ENCODE measurements at regions of chr16 and their contacts with region 1.

Region 1: DNA sequence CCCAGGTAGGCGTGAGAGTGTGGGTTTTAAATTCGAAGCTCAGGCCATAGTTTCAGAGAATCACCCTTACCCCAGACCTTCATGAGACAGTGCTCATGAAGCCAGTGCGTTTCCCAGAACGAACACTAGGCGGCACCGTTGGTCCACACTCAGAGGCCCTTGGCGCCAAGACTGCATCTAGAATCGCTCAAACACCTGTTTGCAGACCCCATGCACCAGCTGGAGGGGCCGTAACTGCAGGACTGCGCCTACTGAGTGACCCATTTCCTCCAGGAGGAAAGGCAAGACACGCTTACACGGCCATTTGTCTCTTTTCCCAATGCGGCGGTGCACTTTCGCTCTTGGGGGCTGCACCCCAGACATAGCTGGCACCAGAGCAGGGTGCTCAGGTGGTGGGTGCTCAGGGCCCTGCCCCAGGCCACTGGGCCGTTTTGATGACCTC is 34.0 kb downstream of the ADGRG5 start:
- DNase-seq: peak; percentile 87
- H3K4me3 Mint-ChIP-seq: no peak overlapping the region
- H3K27ac Mint-ChIP-seq: peak overlapping the region; percentile 97
- H3K4me1 Mint-ChIP-seq: peaks cover 51% of the 10 kb centered on the region
- H3K27me3 Mint-ChIP-seq: peaks cover 2% of the 10 kb centered on the region

Region 2: GRCh38 chr16:57372372-57373116 is 203.9 kb before region 1 on chr16 and contains the start of gene CX3CL1:
- CTCF ChIA-PET with region 1: no interaction called
- POLR2A ChIA-PET with region 1: no interaction called
- DNase-seq: no peak
- H3K4me3 Mint-ChIP-seq: no peak within 1 kb of the TSS
- H3K27ac Mint-ChIP-seq: no peak within 1 kb of the TSS
- H3K4me1 Mint-ChIP-seq: peaks cover 4% of the 10 kb centered on the region
- H3K27me3 Mint-ChIP-seq: peaks cover 2% of the 10 kb centered on the region
- total RNA-seq, gene CX3CL1: not detected

Region 3: GRCh38 chr16:57591086-57591869 is 14.8 kb after region 1 on chr16:
- CTCF ChIA-PET with region 1: interaction called, 60 read pairs
- POLR2A ChIA-PET with region 1: no interaction called
- DNase-seq: peak; percentile 72
- H3K4me3 Mint-ChIP-seq: peak overlapping the region; percentile 53
- H3K27ac Mint-ChIP-seq: peak overlapping the region; percentile 92
- H3K4me1 Mint-ChIP-seq: peaks cover 58% of the 10 kb centered on the region
- H3K27me3 Mint-ChIP-seq: no peaks in the 10 kb centered on the region

Region 4: GRCh38 chr16:57609541-57610401 is 33.3 kb after region 1 on chr16:
- CTCF ChIA-PET with region 1: interaction called, 16 read pairs
- POLR2A ChIA-PET with region 1: no interaction called
- DNase-seq: peak; percentile 82
- H3K4me3 Mint-ChIP-seq: peak overlapping the region; percentile 53
- H3K27ac Mint-ChIP-seq: peak overlapping the region; percentile 95
- H3K4me1 Mint-ChIP-seq: peaks cover 59% of the 10 kb centered on the region
- H3K27me3 Mint-ChIP-seq: no peaks in the 10 kb centered on the region

Region 5: DNA sequence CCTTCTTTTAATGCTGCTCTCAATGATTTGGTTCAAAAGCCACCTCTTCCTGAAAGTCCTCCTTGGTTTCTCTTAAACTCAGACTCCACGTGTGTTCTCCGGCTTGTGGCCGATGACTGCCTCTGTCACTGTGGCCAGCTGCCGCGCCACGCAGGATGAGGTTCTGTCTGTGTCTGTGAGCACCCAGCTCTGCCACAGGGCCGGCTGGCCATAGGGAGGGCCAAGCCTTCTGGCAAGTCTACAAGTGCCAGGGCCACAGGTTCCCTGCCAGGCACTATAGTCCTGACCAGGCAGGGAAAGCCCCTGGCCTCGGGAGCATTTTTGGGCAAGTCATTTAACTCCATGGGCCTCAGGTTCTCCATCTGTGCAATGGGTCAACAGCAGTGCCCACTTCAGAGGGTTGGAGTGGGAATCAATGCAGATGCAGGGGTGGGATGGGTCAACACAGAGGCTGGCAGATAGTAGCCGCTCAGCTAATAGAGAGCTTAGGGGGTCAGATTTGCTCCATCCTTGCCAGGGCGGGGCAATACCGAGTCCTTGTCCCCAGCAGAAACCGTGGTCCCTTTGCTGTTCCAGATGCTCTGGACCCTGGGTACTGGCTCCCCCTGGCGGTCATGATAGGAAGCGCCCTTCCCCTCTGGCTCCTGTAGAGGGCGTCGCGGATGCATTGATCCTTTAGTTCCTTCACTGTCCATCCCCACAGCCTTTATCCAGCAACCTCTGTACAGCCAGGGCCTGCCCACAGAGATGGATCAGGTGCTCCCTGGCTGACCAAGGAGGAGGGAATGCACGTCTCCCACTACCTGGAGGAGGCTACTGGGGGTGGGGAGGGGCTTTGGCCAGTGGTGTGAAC is 72.4 kb after region 1 on chr16:
- CTCF ChIA-PET with region 1: interaction called, 69 read pairs
- POLR2A ChIA-PET with region 1: no interaction called
- DNase-seq: peak; percentile 87
- H3K4me3 Mint-ChIP-seq: no peak overlapping the region
- H3K27ac Mint-ChIP-seq: peak overlapping the region; percentile 77
- H3K4me1 Mint-ChIP-seq: peaks cover 40% of the 10 kb centered on the region
- H3K27me3 Mint-ChIP-seq: no peaks in the 10 kb centered on the region

Region 6: GRCh38 chr16:57734925-57735754 is 158.7 kb after region 1 on chr16:
- CTCF ChIA-PET with region 1: interaction called, 14 read pairs
- POLR2A ChIA-PET with region 1: no interaction called
- DNase-seq: peak; percentile 99
- H3K4me3 Mint-ChIP-seq: peak overlapping the region; percentile 98
- H3K27ac Mint-ChIP-seq: peak overlapping the region; percentile 92
- H3K4me1 Mint-ChIP-seq: peaks cover 27% of the 10 kb centered on the region
- H3K27me3 Mint-ChIP-seq: no peaks in the 10 kb centered on the region

Region 7: GRCh38 chr16:57745768-57746167 is 169.3 kb after region 1 on chr16:
- CTCF ChIA-PET with region 1: no interaction called
- POLR2A ChIA-PET with region 1: no interaction called
- DNase-seq: no peak
- H3K4me3 Mint-ChIP-seq: no peak overlapping the region
- H3K27ac Mint-ChIP-seq: no peak overlapping the region
- H3K4me1 Mint-ChIP-seq: no peaks in the 10 kb centered on the region
- H3K27me3 Mint-ChIP-seq: no peaks in the 10 kb centered on the region

Region 8: DNA sequence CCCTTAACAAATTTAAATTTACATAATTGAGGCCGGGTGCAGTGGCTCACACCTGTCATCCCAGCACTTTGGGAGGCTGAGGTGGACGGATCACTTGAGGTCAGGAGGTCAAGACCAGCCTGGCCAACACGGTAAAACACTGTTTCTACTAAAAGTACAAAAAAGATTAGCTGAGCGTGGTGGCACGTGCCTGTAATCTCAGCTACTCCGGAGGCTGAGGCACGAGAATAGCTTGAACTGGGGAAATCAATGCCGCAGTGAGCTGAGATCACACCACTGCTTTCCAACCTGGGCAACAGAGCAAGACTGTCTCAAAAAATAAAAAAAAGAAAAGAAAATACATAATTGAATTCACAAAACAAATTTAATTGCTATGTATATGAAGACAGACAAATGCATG is 282.2 kb after region 1 on chr16:
- CTCF ChIA-PET with region 1: no interaction called
- POLR2A ChIA-PET with region 1: no interaction called
- DNase-seq: no peak
- H3K4me3 Mint-ChIP-seq: no peak overlapping the region
- H3K27ac Mint-ChIP-seq: no peak overlapping the region
- H3K4me1 Mint-ChIP-seq: no peaks in the 10 kb centered on the region
- H3K27me3 Mint-ChIP-seq: peaks cover 25% of the 10 kb centered on the region